Heart left ventricle (tissue), 16 donors: ENCODE measurements at regions of chr9 and their contacts with region 1.

Region 1: GRCh38 chr9:4762108-4762885 is 21.3 kb upstream of the AK3 start:
- DNase-seq: peak in 4 of 5 donors; percentile 59 to 71 (median 66)
- ATAC-seq: peak; percentile 32 to 62 (median 50)
- H3K4me3 ChIP-seq: peak overlapping the region in 9 of 12 donors; percentile 7 to 39 (median 32)
- H3K27ac ChIP-seq: peak overlapping the region in 6 of 12 donors; percentile 3 to 63 (median 36)
- H3K4me1 ChIP-seq: peaks cover 0 to 45% (median 11%) of the 10 kb centered on the region in 12 donors
- H3K27me3 ChIP-seq: no peaks in the 10 kb centered on the region
- CTCF ChIP-seq: peak; percentile 61 to 91 (median 81)
- POLR2A ChIP-seq: no peak

Region 2: DNA sequence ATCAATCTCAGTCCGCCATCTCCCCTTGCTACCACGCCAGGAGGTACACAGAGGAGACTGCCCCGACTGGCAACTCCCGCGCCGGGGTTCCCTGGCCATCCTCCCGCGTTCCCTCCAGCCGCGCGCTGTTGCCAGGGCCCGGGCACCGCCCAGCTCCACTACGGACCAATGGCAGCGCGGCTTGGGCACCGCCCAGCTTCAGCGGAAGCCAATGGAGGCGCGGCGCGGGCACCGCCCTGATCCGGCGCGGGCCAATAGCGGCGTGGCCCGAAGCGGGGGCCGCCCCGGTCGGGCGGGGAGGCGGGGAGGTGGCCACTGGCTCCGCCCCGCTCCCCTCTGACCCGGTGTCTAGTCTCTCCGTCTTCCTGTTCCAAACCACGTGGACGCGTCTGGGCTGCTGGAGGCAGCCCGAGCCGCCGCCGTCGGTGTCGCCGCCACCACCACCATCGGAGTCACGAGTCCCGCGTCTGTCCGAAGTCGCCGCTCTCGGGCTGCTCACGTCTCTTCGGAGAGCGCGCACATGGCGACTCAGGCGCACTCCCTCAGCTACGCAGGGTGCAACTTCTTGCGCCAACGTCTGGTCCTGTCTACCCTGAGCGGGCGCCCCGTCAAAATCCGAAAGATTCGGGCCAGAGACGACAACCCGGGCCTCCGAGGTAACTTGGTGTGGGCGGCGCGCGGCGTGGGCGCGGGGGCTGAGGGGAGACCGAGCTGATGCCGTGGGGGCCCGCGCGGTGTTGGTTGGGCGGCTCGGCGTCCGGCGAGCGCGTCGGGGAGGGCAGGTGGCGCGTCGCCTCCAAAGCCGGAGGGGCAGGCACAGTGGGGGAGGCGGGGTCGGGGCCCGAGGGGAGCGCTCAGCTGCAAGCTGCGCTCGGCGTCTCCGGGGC is 30.5 kb after region 1 on chr9 and contains the start of gene RCL1:
- intact Hi-C with region 1: loop called in 4 of 10 experiments (anchors 5 kb)
- DNase-seq: peak; percentile 96 to 98 (median 96)
- ATAC-seq: peak; percentile 99 to 100 (median 99)
- H3K4me3 ChIP-seq: peak within 1 kb of the TSS; percentile 62 to 98 (median 88)
- H3K27ac ChIP-seq: peak within 1 kb of the TSS; percentile 46 to 88 (median 81)
- H3K4me1 ChIP-seq: peaks cover 0 to 27% (median 17%) of the 10 kb centered on the region in 12 donors
- H3K27me3 ChIP-seq: no peaks in the 10 kb centered on the region
- CTCF ChIP-seq: no peak
- POLR2A ChIP-seq: peak in 1 of 2 donors; percentile 67
- total RNA-seq, gene RCL1: 5.1 to 10.1 (median 7.2) TPM

Region 3: DNA sequence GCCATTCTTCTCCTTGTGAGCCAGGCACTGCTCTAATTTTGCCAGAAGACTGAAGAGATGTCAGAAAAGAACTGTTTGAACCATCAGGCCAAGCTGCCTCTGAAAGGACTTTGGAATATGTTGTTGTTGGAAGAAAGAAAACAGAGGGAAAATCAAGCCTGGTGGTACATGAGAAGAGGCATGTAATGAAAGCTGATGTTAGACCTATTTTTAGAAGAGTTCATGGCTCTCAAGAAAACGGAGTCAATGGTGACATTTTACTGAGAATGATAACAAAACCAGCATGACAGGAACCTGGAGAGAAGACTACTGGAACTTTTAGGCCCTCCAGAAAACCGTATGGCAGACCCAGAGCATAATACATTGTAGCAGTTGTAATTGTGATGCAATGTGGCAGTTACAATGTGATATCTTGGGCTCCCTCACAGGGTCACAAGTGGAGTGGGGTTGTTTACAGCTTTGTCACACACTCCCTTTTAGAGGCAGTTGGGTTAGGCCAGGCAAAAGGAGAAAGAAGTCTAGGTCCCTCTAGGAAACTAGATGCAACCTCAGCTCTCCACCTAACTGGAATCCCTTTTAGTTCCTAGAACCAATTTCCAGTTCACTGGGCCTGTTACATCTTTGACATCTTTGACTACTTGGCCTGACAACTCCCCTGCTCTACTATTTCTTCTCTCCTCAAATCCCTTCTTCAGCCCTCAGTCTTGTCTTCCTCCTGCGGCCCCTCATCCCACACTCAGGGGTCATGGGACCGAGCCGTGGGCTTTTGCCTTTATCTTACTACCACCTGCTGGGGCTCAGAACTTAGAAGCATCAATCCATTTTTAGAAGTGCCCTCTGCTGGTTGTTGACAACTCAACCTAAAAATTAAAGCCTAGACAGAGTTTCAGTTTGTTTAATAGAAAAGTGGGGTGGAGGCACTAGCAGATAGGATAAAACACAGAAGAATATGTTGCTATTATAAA is 161.6 kb after region 1 on chr9:
- intact Hi-C with region 1: loop called in 5 of 10 experiments (anchors 5 to 10 kb)
- DNase-seq: no peak
- ATAC-seq: peak; percentile 32 to 66 (median 52)
- H3K4me3 ChIP-seq: no peak overlapping the region
- H3K27ac ChIP-seq: peak overlapping the region in 6 of 12 donors; percentile 4 to 57 (median 22)
- H3K4me1 ChIP-seq: peaks cover 0 to 23% (median 7%) of the 10 kb centered on the region in 12 donors
- H3K27me3 ChIP-seq: no peaks in the 10 kb centered on the region
- CTCF ChIP-seq: peak in 7 of 12 donors; percentile 13 to 44 (median 23)
- POLR2A ChIP-seq: no peak

Region 4: DNA sequence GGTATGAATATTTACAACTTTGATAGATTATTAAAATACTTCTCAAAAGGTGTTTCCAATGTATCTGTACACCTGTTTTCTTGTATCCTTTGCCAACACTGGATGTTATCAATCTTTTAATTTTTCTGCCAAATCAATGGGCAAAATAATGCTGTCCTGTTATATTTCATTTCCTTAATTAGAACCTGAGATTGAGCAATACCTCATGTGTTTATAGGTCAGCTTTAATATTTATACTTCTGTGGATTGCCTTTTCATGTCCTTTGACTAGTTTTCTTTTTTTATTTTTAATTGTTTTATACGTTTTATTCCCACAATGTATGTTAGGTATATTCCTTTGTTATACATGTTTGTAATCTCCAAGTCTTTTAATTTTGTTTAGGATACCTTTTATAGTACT is 300.3 kb after region 1 on chr9:
- intact Hi-C with region 1: loop called in 1 of 10 experiments (anchors 10 kb)
- DNase-seq: no peak
- ATAC-seq: no peak
- H3K4me3 ChIP-seq: no peak overlapping the region
- H3K27ac ChIP-seq: no peak overlapping the region
- H3K4me1 ChIP-seq: peaks cover 0 to 8% (median 0%) of the 10 kb centered on the region in 12 donors
- H3K27me3 ChIP-seq: no peaks in the 10 kb centered on the region
- CTCF ChIP-seq: no peak
- POLR2A ChIP-seq: no peak

Region 5: GRCh38 chr9:5425006-5425628 is 662.8 kb after region 1 on chr9:
- intact Hi-C with region 1: loop called in 3 of 10 experiments (anchors 10 kb)
- DNase-seq: no peak
- ATAC-seq: no peak
- H3K4me3 ChIP-seq: no peak overlapping the region
- H3K27ac ChIP-seq: no peak overlapping the region
- H3K4me1 ChIP-seq: no peaks in the 10 kb centered on the region
- H3K27me3 ChIP-seq: no peaks in the 10 kb centered on the region
- CTCF ChIP-seq: peak; percentile 18 to 49 (median 36)
- POLR2A ChIP-seq: no peak

Region 6: DNA sequence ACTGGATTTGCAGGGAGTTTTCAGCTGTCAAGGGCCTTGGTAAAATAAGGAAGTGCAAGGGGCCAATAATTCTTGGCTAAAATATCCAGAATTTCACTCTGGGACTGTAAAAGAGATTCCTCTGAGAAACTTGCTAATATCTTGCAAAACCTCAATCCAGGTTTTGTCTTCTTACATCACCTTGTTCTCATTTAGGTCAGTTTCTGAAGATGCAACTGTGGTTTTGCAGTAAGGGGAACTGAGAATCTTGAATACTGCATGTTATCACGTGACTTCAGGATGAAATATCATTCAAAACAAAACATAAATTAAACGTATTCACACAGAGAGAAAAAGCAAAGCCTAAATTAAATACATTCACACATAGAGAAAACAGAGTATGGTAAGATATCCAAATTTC is 831.6 kb after region 1 on chr9:
- intact Hi-C with region 1: loop called in 9 of 10 experiments (anchors 5 to 10 kb)
- DNase-seq: no peak
- ATAC-seq: no peak
- H3K4me3 ChIP-seq: no peak overlapping the region
- H3K27ac ChIP-seq: no peak overlapping the region
- H3K4me1 ChIP-seq: peaks cover 0 to 21% (median 3%) of the 10 kb centered on the region in 12 donors
- H3K27me3 ChIP-seq: no peaks in the 10 kb centered on the region
- CTCF ChIP-seq: no peak
- POLR2A ChIP-seq: no peak

Region 7: GRCh38 chr9:5608298-5609225 is 846.3 kb after region 1 on chr9:
- intact Hi-C with region 1: loop called in 1 of 10 experiments (anchors 5 kb)
- DNase-seq: no peak
- ATAC-seq: peak; percentile 82 to 89 (median 86)
- H3K4me3 ChIP-seq: peak overlapping the region in 11 of 12 donors; percentile 23 to 60 (median 45)
- H3K27ac ChIP-seq: peak overlapping the region; percentile 48 to 86 (median 64)
- H3K4me1 ChIP-seq: peaks cover 0 to 23% (median 6%) of the 10 kb centered on the region in 12 donors
- H3K27me3 ChIP-seq: no peaks in the 10 kb centered on the region
- CTCF ChIP-seq: peak in 4 of 12 donors; percentile 7 to 24 (median 20)
- POLR2A ChIP-seq: no peak